ENCODE measurements at regions of chr11 and their contacts with region 1.

Region 1: GRCh38 chr11:33857933-33858371 is 33.9 kb downstream of the LMO2 start:
- DNase-seq: peak; percentile 74
- CTCF ChIP-seq: peak; percentile 96

Region 2: GRCh38 chr11:32858731-32859130 is 999.2 kb before region 1 on chr11:
- CTCF ChIA-PET with region 1: no interaction called
- POLR2A ChIA-PET with region 1: no interaction called
- DNase-seq: no peak
- CTCF ChIP-seq: no peak

Region 3: DNA sequence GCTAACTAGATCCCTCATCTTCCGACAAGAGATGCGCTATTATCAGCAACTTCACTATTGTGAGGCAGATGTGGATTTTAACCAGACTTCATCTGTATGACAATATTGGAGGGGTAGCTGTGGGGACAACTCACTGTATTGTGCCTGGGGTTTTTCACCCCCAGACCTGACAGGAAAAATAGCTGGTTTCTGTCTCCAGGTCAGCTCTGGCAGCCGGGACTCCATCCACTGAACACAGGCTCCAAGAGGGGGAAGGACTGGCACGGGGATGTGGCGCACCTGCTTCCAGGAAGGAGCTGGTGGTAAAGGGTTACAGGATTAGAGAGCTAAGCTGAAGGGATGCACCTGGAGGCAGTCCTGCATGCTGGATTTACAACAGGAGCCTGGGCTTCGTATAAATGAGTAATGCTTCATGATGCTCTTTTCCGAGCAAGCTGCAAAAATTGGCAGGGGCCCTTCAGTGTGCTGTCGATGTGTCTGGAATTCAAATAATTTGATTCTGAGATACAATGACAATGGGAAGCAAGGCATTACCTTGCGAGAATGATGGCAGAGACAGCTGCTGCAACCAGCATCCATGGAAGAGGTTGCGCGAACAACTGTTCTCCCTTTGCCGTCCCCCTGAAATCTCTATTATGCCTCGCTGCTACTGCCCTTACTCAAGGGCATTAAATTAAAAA is 15.6 kb before region 1 on chr11:
- CTCF ChIA-PET with region 1: interaction called, 17 read pairs
- POLR2A ChIA-PET with region 1: no interaction called
- DNase-seq: no peak
- CTCF ChIP-seq: no peak

Region 4: DNA sequence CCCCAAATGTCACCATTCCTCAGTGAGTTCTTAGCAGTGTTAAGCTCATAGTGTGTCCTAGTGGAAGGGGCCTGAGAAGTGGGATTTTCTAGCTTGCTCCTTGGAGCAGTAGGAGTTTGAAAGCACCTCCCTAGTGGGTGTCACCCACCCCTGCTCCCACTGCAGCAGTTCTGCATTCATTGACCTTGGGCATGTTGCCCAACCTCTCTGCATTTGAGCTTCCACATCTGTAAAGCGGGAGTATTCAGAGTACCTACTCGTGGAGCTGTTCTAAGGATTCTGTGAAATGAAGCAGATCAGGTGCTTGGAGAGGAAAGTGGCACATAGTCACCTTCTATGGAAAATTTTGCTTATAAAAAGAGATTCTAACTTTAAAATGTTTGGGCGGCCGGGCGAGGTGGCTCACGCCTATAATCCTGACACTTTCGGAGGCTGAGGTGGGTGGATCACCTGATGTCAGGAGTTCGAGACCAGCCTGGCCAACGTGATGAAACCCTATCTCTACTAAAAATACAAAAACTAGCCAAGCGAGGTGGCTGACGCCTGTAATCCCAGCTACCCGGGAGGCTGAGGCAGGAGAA is 17.0 kb after region 1 on chr11:
- CTCF ChIA-PET with region 1: interaction called, 33 read pairs
- POLR2A ChIA-PET with region 1: interaction called, 4 read pairs
- DNase-seq: no peak
- CTCF ChIP-seq: no peak

Region 5: DNA sequence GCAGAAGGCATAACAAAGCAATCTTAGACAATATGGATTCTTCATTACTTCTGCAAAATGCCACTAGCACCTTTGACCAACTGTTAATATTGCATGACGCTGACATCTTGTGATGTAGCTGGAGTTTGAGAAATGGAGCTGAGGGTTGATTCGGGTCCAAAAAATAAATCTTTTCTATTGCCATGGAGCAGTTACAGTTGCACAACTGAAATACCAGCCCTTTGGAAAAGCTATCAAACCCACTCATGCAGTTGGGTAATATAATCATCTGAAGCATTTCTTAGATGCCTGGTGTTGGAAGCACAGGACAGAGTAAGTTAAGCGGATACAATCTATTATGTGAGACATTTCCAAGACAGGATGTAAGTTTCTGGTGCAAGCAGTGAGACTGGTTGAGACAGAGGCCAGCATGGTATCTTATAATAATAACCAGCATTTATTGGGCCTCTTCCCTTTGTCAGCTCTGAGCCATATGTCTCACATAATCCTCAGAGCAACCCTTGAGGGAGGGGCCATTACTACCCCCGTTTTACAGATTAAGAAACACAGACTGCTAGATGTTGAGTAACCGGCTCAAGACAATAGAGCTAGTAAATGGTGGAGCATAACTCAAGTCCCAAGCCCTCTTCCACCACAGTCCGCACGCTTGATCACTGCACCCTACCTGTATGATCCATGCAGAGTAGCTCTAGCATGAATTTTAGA is 118.7 kb after region 1 on chr11:
- CTCF ChIA-PET with region 1: interaction called, 199 read pairs
- POLR2A ChIA-PET with region 1: no interaction called
- DNase-seq: no peak
- CTCF ChIP-seq: no peak

Region 6: DNA sequence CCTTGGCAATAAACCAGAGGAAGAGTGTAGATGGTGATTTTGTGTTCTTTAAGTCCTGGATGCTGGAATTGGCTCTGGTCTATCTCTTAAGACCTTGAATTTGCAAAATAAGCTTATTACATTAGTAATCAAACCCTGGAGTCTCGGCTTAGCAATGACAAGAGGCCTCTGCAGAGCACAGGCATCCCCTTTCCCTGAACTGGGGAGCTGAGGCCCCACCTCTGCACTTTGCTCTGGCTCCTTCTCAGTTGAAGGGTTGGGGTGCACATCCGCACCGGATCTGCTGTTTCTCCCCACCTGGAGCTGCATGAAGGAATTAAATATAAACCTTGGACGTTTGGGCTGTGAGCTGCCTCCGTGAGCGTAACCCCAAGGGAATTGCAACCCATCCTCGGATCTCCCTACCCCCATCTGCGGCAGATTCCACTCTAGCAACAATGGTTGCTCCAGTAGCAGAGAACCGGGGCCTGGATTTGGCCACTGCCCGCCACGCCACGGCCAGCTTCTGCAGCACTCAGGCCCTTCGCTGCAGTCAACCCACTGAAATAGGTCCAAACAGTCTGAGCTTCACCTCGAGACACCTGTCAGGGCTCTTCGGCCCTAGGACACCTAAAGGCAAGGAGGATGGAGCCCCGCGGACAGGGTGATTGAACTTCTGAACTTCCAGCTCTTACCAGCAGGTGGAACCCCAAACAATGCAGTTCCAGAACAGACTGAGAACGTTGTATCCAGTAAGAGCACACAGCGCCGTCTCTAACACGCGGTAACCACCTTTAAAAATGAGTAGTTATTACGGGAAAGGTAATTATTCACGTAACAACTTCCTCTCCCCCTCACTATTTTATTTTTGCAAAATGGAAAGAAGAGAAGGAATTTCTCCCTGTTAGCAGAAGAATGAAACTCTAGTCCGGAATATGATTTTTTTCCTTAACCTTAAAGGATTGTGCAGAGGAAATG is 138.8 kb after region 1 on chr11:
- CTCF ChIA-PET with region 1: interaction called, 15 read pairs
- POLR2A ChIA-PET with region 1: no interaction called
- DNase-seq: peak; percentile 77
- CTCF ChIP-seq: peak; percentile 73

Region 7: GRCh38 chr11:34145847-34146381 is 288.0 kb after region 1 on chr11:
- CTCF ChIA-PET with region 1: no interaction called
- POLR2A ChIA-PET with region 1: no interaction called
- DNase-seq: peak; percentile 67
- CTCF ChIP-seq: no peak

Region 8: GRCh38 chr11:34214961-34215805 is 357.2 kb after region 1 on chr11:
- CTCF ChIA-PET with region 1: no interaction called
- POLR2A ChIA-PET with region 1: no interaction called
- DNase-seq: no peak
- CTCF ChIP-seq: no peak